Colonic mucosa (tissue), 4 donors: ENCODE measurements at regions of chr12 and their contacts with region 1.

Region 1: DNA sequence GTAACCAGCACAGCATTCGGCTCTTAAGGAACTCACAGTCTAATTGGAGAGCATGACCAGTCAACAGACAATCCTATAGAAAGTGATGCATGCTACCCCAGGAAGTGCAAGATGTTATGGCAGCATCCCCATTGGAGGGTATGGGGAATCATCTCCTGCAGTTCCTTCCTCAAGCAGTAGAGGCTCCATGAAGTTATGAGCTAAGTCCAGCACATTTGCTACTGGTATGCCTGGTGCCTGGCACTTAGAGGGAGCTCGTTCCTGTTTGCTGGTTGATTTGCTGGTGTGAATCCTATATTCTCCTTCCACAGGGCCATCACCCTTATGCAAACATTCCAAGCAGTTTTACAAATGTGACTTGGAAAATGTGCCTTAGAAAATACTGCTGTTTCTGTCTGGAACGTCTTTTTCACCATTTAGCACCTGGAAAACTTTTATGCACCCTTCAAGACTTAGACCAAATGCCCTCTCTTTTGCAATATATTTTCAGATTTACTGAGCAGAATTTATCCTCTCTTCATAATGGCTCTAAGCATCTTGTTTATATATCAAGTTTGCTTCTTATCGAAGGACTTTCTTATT is 136.1 kb upstream of the WSCD2 start:
- DNase-seq: peak; percentile 17
- H3K4me3 ChIP-seq: no peak overlapping the region
- H3K27ac ChIP-seq: no peak overlapping the region
- H3K4me1 ChIP-seq: no peaks in the 10 kb centered on the region
- H3K27me3 ChIP-seq: no peaks in the 10 kb centered on the region
- CTCF ChIP-seq: no peak

Region 2: DNA sequence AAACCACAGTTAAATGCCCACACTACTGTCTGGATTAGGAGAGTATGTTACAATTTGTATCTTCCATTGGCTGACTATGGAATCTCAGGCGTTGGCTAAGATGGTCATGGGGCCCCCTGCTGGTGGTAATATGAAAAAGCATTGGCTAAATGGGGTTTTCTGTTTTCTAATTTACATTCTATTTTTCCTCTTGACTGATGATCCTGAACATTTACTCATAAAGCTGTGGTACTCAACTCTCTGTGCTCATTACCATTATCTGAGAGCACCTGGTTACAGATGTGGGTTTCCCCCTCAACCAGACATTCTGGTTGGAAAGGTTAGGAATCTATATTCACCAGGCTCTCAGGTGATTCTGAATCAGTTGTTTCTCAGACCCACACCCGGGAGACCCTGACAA is 201.0 kb after region 1 on chr12:
- intact Hi-C with region 1: loop called (anchors 5 kb)
- DNase-seq: peak; percentile 22
- H3K4me3 ChIP-seq: no peak overlapping the region
- H3K27ac ChIP-seq: no peak overlapping the region
- H3K4me1 ChIP-seq: no peaks in the 10 kb centered on the region
- H3K27me3 ChIP-seq: no peaks in the 10 kb centered on the region
- CTCF ChIP-seq: peak; percentile 52